ENCODE measurements at regions of chr9 and their contacts with region 1.

Region 1: GRCh38 chr9:104682642-104683041 is 11.7 kb upstream of the OR13D1 start:
- DNase-seq: peak; percentile 28
- ATAC-seq: peak; percentile 75; the same call in 1 of the 2 replicates
- H3K4me3 ChIP-seq: no peak overlapping the region
- H3K27ac ChIP-seq: no peak overlapping the region
- H3K4me1 ChIP-seq: no peaks in the 10 kb centered on the region
- H3K27me3 ChIP-seq: no peaks in the 10 kb centered on the region
- CTCF ChIP-seq: peak; percentile 47; the same call in 1 of the 2 replicates

Region 2: DNA sequence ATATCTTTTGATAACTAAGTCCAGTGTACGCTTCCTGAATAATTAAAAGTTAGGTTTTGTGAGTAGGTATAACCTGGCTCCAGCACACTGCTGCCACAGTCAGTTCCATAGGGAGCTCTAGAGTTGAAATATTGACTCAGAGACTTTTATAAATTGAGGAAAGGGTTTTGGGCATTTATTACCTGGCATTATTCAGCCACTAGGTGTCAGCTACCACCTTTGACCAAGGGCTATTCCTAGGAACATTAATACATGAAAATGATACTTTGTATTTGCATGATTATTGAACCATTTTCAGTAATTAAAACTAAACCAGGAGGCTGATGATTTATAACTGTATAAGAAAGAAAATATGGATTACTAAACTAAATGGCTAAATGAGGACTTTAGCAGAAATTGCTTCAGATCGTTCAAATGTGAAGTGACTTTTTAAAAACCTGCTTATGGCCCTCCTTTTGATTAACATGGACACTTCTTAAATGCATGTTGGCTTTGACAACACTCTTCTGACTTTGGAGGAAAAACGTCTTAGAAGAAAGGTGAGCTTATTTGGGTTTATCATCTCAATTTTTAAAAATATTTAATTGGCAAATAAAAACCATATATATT is 505.5 kb before region 1 on chr9:
- CTCF ChIA-PET with region 1: no interaction called
- POLR2A ChIA-PET with region 1: no interaction called
- in situ Hi-C with region 1: no loop called
- intact Hi-C with region 1: loop called (anchors 1 kb)
- DNase-seq: no peak
- ATAC-seq: no peak
- H3K4me3 ChIP-seq: no peak overlapping the region
- H3K27ac ChIP-seq: no peak overlapping the region
- H3K4me1 ChIP-seq: no peaks in the 10 kb centered on the region
- H3K27me3 ChIP-seq: no peaks in the 10 kb centered on the region
- CTCF ChIP-seq: peak; percentile 48; the same call in 1 of the 2 replicates

Region 3: GRCh38 chr9:104494808-104495207 is 187.8 kb before region 1 on chr9:
- CTCF ChIA-PET with region 1: no interaction called
- POLR2A ChIA-PET with region 1: no interaction called
- in situ Hi-C with region 1: no loop called
- intact Hi-C with region 1: loop called (anchors 5 kb)
- DNase-seq: no peak
- ATAC-seq: no peak
- H3K4me3 ChIP-seq: no peak overlapping the region
- H3K27ac ChIP-seq: no peak overlapping the region
- H3K4me1 ChIP-seq: no peaks in the 10 kb centered on the region
- H3K27me3 ChIP-seq: no peaks in the 10 kb centered on the region
- CTCF ChIP-seq: peak; percentile 28; the same call in 1 of the 2 replicates

Region 4: DNA sequence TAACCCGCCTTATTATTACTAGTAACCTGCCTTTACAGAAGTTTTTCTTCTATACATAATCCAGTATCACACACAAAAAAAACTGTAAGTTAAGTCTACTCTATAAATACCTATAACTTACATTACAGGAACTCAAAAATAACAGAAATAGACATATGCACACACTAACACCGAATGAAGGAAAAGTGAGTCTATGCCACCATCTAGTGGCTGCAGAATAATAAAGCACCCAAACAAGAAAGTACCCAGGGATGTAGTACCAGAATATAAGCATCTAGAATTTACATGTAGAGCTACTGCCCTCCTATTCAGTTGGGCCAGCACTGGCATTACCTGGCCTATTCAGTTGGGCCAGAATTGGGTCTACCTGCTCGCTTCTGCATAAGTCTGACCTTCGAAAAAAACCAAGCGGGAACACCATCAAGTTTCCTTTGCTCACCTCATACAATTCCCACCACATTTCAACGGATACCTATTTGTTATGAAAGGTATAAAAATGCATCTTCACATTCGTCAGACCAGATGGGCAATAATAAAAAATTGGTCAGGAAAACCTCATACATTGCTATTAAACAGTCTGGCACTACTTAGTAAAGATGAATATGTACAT is 60.8 kb after region 1 on chr9:
- CTCF ChIA-PET with region 1: no interaction called
- POLR2A ChIA-PET with region 1: no interaction called
- in situ Hi-C with region 1: no loop called
- intact Hi-C with region 1: loop called (anchors 5 kb)
- DNase-seq: peak; percentile 48
- ATAC-seq: peak; percentile 49; the same call in 1 of the 2 replicates
- H3K4me3 ChIP-seq: no peak overlapping the region
- H3K27ac ChIP-seq: no peak overlapping the region
- H3K4me1 ChIP-seq: peaks cover under 1% of the 10 kb centered on the region; the same call in 1 of the 2 replicates
- H3K27me3 ChIP-seq: no peaks in the 10 kb centered on the region
- CTCF ChIP-seq: peak; percentile 63

Region 5: GRCh38 chr9:105216440-105217178 is 534.0 kb after region 1 on chr9:
- CTCF ChIA-PET with region 1: no interaction called
- POLR2A ChIA-PET with region 1: no interaction called
- in situ Hi-C with region 1: no loop called
- intact Hi-C with region 1: no loop called
- DNase-seq: no peak
- ATAC-seq: no peak
- H3K4me3 ChIP-seq: no peak overlapping the region
- H3K27ac ChIP-seq: no peak overlapping the region
- H3K4me1 ChIP-seq: no peaks in the 10 kb centered on the region
- H3K27me3 ChIP-seq: no peaks in the 10 kb centered on the region
- CTCF ChIP-seq: no peak